ENCODE measurements at regions of chr22 and their contacts with region 1.

Region 1: GRCh38 chr22:40651563-40652501 is 15.3 kb upstream of the MRTFA start:
- DNase-seq: peak; percentile 99
- H3K4me3 Mint-ChIP-seq: peak overlapping the region; percentile 83
- H3K27ac Mint-ChIP-seq: peak overlapping the region; percentile 98
- H3K4me1 Mint-ChIP-seq: peaks cover 32% of the 10 kb centered on the region
- H3K27me3 Mint-ChIP-seq: no peaks in the 10 kb centered on the region
- CTCF ChIP-seq: no peak

Region 2: DNA sequence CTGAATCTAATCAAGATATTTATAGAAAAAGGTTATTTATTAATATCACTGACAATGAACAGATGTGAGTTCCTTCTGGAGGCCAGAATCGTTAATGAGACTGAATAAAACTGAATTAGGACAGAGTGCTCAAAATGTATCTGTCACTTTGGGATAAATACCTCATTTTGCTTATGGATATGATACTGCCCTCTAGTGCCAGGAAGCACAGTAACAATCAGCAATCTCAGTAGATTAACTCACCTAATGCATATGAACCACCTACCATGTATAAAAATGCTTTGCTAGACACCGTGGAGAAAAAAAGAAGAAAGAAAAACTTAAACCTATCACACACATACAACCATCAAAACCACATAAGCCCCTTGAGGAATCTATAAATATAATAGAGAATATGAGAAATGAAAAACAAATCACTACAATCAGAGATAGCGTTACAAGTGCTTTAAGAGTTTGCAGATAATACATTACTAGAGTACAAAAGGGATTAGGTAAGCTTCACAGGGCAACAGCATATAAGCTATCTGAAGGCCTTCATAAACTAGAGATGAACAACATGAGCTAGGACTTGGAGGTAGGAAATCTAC is 164.1 kb before region 1 on chr22:
- CTCF ChIA-PET with region 1: interaction called, 34 read pairs
- POLR2A ChIA-PET with region 1: interaction called, 28 read pairs
- intact Hi-C with region 1: no loop called
- DNase-seq: peak; percentile 54
- H3K4me3 Mint-ChIP-seq: no peak overlapping the region
- H3K27ac Mint-ChIP-seq: peak overlapping the region; percentile 94
- H3K4me1 Mint-ChIP-seq: peaks cover 39% of the 10 kb centered on the region
- H3K27me3 Mint-ChIP-seq: no peaks in the 10 kb centered on the region
- CTCF ChIP-seq: peak; percentile 55

Region 3: GRCh38 chr22:40525249-40525884 is 126.5 kb before region 1 on chr22:
- CTCF ChIA-PET with region 1: interaction called, 40 read pairs
- POLR2A ChIA-PET with region 1: interaction called, 33 read pairs
- intact Hi-C with region 1: no loop called
- DNase-seq: peak; percentile 65
- H3K4me3 Mint-ChIP-seq: no peak overlapping the region
- H3K27ac Mint-ChIP-seq: no peak overlapping the region
- H3K4me1 Mint-ChIP-seq: peaks cover 12% of the 10 kb centered on the region
- H3K27me3 Mint-ChIP-seq: no peaks in the 10 kb centered on the region
- CTCF ChIP-seq: peak; percentile 54

Region 4: DNA sequence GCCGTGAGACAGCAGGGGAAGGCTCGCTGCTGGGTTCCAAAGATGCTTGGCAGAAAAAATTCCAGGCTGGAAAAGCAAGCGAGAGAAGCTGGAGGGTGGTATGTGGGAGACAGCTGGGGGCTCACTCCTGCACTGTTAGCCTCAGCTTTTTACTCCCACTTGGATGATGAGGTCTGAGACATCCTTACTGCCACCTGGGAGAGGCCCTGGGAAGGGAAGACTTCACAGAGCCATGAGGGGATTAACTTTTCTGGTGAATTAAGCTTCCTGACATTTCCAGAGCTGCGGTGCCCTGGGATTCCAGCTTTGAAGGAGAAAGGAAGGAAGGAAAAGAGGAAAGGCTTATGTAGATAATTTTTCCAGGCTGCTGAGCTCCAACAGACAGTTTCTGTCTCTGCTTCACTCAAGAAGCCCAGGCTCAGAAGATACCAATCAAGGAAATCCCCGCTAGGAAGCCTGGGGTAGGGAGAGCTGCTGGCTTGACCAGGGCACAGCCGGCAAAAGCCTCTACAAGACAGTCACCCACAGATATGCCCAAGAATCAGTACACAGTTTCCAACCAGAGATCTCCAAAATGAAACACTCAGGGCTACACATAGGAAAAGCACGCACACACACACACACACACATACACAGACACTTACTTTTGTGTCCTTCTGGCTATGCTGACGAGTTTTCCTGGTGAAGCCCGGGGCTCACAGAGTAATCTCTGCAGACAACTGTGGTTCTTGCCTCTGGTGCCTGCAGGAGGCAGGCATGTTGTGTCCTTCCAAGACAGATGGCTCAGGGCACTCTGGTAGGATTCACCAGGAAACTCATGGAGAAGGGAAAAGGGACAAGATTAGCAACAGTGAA is 28.4 kb after region 1 on chr22:
- CTCF ChIA-PET with region 1: interaction called, 11 read pairs
- POLR2A ChIA-PET with region 1: interaction called, 18 read pairs
- intact Hi-C with region 1: loop called (anchors 1 kb)
- DNase-seq: no peak
- H3K4me3 Mint-ChIP-seq: no peak overlapping the region
- H3K27ac Mint-ChIP-seq: no peak overlapping the region
- H3K4me1 Mint-ChIP-seq: peaks cover 12% of the 10 kb centered on the region
- H3K27me3 Mint-ChIP-seq: no peaks in the 10 kb centered on the region
- CTCF ChIP-seq: no peak

Region 5: GRCh38 chr22:40856513-40857308 is 204.9 kb after region 1 on chr22 and contains the starts of genes ST13 and XPNPEP3:
- CTCF ChIA-PET with region 1: no interaction called
- POLR2A ChIA-PET with region 1: interaction called, 15 read pairs
- intact Hi-C with region 1: loop called (anchors 2 kb)
- DNase-seq: peak; percentile 96
- H3K4me3 Mint-ChIP-seq: peak within 1 kb of the TSS; percentile 97
- H3K27ac Mint-ChIP-seq: peak within 1 kb of the TSS; percentile 99
- H3K4me1 Mint-ChIP-seq: peaks cover 15% of the 10 kb centered on the region
- H3K27me3 Mint-ChIP-seq: no peaks in the 10 kb centered on the region
- CTCF ChIP-seq: no peak
- total RNA-seq, gene ST13: 191 and 231 TPM in 2 replicates
- total RNA-seq, gene XPNPEP3: 33.1 and 47.2 TPM in 2 replicates